GM12878 (cell line): ENCODE measurements at regions of chr6 and their contacts with region 1.

Region 1: DNA sequence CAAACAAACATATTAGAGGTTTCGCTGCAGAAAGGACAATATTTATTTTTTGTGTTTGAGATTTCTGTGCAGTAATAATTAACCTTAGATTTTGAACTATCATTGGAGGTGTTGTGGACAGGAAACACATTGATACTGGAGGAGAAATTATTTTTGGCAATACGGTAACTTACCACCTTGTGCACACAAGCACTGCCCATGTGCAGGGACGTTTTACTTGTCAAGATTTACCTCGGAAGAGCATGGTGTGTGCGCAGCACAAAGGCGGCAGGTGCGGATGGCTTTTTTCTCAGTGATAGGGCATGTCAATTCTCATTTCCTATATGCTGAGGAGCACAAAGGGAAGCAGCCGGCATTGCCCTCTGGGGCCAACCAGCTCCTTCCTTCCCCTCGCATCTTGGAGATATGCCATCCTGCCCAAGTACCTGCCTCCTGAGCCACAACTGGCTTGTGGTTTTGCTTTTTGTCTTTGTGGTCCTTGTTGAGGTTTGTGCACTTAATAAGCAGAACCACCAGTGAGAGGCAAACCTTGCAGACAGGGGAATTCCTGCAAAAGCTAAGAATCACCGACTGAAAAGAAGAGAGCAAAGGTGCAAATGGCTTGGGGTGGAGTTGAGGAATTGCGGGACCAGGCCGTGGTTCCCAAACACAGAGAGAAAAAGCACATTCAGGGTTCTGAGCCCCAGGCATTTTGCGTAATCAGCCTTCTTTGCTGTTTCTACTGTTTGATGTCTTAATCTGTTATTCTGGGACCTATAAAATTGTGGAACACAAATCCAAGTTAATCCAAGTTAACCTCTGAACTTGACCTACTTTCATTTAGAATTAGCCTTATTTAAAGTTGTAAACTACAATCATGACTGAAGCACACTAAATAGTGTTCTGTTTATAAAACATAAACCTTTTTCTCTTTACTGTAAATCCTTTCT is 21.9 kb downstream of the SAMD5 start:
- DNase-seq: peak; percentile 20
- ATAC-seq: peak; percentile 44
- H3K4me3 ChIP-seq: no peak overlapping the region
- H3K27ac ChIP-seq: no peak overlapping the region
- H3K4me1 ChIP-seq: no peaks in the 10 kb centered on the region
- H3K27me3 ChIP-seq: no peaks in the 10 kb centered on the region; a peak in 1 of 4 replicates
- CTCF ChIP-seq: no peak
- EP300 ChIP-seq: no peak
- POLR2A ChIP-seq: no peak
- RAD21 ChIP-seq: no peak

Region 2: GRCh38 chr6:147561726-147562125 is 31.3 kb after region 1 on chr6:
- CTCF ChIA-PET with region 1: no interaction called
- POLR2A ChIA-PET with region 1: no interaction called
- RAD21 ChIA-PET with region 1: no interaction called
- SMC1A ChIA-PET with region 1: no interaction called
- in situ Hi-C with region 1: no loop called
- intact Hi-C with region 1: loop called (anchors 1 kb)
- DNase-seq: no peak
- ATAC-seq: no peak
- H3K4me3 ChIP-seq: no peak overlapping the region
- H3K27ac ChIP-seq: no peak overlapping the region
- H3K4me1 ChIP-seq: no peaks in the 10 kb centered on the region
- H3K27me3 ChIP-seq: no peaks in the 10 kb centered on the region
- CTCF ChIP-seq: no peak
- EP300 ChIP-seq: no peak
- POLR2A ChIP-seq: no peak
- RAD21 ChIP-seq: no peak